Left ventricle myocardium inferior (tissue), 1 donor: ENCODE measurements at regions of chr9 and their contacts with region 1.

Region 1: GRCh38 chr9:106970219-106970975 is 107.4 kb downstream of the ZNF462 start:
- DNase-seq: no peak
- H3K4me3 ChIP-seq: no peak overlapping the region
- H3K27ac ChIP-seq: no peak overlapping the region
- H3K4me1 ChIP-seq: peaks cover 51% of the 10 kb centered on the region
- H3K27me3 ChIP-seq: no peaks in the 10 kb centered on the region
- CTCF ChIP-seq: no peak

Region 2: DNA sequence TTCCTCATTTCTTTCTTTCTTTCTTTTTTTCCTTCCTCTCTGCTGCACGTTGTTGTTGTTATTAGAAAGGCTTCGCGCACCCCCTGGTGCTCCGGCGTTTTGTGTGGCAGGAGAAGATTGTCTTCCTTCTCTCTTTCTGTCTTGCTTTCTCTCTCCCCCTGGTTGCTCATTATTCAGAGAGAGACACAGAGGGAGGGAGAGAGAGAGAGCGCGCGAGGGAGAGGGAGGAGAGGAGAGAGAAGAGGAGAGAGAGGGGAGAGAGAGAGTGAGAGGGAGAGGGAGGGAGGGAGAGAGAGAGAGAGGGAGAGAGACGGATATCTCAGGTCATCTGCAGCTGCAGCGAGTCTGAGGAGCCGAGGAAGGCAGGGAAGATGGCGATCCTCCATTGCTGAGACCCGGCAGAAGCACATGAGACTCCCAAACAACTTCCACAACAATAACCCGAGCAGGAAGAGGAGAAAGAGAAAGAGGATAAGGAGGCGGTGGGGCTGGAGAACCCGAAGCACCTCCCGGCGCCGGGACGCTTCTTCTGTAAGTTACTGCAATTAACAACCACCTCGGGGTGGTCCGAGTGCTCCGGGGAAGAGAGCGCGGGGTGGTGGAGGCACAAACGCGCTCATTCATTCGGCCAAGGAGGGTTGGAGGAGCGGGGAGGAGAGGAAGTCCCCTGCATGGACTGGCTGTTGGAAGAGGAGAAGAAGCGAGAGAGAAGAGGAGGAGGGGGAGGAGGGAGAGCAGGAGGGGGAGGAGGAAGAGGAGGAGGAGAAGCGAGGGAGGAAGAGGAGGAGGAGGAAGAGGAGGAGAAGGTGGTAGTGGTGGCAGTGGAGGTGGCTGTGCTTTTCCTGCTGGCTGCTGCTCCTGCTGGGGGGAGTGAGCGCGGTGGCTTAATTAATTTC is 107.3 kb before region 1 on chr9 and contains the start of gene ZNF462:
- intact Hi-C with region 1: loop called (anchors 10 kb)
- DNase-seq: peak; percentile 35
- H3K4me3 ChIP-seq: peak within 1 kb of the TSS; percentile 83
- H3K27ac ChIP-seq: peak within 1 kb of the TSS; percentile 89
- H3K4me1 ChIP-seq: peaks cover 71% of the 10 kb centered on the region
- H3K27me3 ChIP-seq: no peaks in the 10 kb centered on the region
- CTCF ChIP-seq: peak; percentile 35
- total RNA-seq, gene ZNF462: 29.2 TPM

Region 3: GRCh38 chr9:107044872-107045271 is 74.5 kb after region 1 on chr9:
- intact Hi-C with region 1: no loop called
- DNase-seq: no peak
- H3K4me3 ChIP-seq: no peak overlapping the region
- H3K27ac ChIP-seq: no peak overlapping the region
- H3K4me1 ChIP-seq: peaks cover 6% of the 10 kb centered on the region
- H3K27me3 ChIP-seq: no peaks in the 10 kb centered on the region
- CTCF ChIP-seq: no peak

Region 4: DNA sequence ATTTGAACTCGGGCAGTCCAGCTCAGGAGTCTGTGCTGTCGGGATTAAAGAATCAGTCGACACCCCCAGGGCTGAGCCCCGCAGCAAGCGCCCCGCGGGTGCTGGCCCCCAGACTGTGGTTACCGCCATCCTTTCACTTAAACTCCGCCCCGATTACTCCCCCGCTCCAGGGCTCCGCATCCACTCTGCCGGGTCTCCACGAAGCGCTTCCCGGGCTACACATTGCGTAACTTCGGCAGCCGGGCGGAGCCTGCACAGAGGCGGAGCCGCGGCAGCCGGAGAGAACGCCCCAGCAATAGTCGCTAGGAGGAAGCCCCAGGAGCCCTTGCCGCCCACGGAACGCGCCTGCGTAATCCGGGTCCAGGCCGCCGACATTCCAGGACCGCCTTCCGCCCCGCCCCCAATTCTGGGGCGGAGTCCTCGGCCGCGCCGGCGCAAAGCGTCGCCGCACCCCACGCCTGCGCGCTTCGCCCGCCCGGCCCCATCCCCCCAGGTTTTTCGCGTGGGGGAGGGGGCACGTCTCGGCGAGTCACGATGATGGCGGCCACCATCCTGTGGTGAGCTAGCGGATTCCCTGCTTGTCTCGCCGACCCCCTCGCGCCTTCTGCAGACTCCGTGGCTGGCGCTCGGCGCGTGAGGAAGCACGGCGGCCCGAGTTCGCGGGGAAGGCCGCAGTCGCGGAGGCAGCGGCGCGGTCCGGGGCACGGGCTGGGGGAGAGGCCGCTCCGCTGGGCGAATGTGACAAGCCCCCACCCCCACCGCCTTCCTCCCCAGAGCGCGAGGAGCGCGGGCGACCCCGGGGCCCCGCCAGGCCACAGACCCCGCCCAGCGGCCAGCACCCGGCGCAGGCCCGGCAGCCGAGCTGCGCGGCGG is 312.6 kb after region 1 on chr9 and contains the start of gene RAD23B:
- intact Hi-C with region 1: no loop called
- DNase-seq: peak; percentile 98
- H3K4me3 ChIP-seq: peak within 1 kb of the TSS; percentile 97
- H3K27ac ChIP-seq: peak within 1 kb of the TSS; percentile 99
- H3K4me1 ChIP-seq: peaks cover 57% of the 10 kb centered on the region
- H3K27me3 ChIP-seq: no peaks in the 10 kb centered on the region
- CTCF ChIP-seq: no peak
- total RNA-seq, gene RAD23B: 104 TPM